ENCODE measurements at regions of chr20 and their contacts with region 1.

Region 1: DNA sequence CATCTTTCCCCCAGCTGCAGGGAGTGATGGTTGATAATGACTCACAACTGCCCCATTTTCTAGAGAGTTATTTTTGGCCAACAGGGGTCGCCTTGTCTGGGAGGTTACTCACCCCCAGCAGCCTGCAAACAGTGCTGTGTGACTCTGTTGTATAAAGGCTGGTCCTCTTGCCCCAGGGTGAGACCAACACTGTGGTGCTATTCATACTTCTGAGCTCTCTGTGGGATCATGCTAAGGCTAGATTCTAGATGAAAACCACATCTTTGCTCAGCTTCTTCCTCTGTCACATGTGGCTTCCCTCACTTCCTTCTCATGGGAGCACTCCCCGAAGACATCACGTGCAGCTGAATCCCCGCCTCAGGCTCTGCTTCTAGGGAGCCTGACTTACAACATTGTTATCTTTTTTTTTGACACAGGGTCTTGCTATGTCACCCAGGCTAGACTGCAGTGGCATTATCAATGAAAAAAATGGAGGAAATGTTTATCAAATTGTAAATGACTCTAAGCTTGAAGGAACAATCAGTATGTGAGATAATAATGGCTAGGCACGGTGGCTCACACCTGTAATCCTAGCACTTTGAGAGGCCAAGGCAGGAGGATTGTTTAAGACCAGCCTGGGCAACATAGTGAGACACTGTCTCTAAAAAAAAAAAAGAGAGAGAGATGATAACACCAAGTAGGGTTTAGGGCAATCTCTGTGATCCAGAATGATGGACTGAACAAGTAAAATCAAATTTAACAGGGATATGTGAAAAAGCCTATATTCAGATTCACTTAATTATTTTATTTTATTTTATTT is 55.7 kb upstream of the SLC23A2 start:
- DNase-seq: peak; percentile 85
- ATAC-seq: peak; percentile 98
- H3K4me3 Mint-ChIP-seq: no peak overlapping the region
- H3K27ac Mint-ChIP-seq: peak overlapping the region; percentile 83
- H3K4me1 Mint-ChIP-seq: peaks cover 22% of the 10 kb centered on the region
- H3K27me3 Mint-ChIP-seq: no peaks in the 10 kb centered on the region
- CTCF ChIP-seq: peak; percentile 71

Region 2: DNA sequence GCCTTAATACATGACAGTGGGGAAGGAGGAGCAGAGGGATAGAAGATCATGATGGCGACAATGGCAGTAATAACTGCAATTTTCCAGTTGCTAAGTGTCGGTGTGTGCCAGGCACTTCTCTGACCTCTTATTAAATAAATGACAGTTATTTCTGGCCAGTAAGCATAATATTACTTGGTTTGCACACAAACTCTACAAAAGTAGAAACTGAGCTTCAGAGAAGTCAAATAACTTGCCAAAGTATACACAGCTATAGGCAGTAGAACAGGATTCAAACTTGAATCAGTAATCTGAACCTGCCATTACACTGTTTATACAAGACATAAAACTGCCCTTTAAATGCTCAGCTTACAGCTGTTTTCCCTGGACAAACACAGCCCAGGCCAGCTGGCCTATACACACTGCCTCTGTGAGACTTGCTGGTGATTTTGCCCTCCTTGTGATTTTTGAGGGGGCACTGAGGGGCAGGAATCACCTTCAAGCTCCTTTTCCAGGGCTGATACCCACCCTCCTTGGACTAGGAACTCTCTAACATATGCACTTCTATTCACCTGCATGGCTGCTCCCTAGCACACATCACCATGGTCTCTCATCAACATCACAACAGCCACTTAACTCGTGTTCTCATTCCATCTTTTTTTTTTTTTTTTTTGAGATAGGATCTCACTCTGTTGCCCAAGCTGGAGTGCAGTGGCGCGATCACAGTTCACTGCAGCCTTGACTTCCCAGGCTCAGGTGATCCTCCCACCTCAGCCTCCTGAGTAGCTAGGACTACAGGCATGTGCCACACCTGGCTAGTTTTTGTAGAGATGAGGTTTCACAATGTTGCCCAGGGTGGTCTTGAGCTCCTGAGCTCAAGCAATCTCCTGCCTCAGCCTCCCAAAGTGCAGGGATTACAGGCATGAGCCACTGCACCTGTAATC is 119.3 kb before region 1 on chr20:
- CTCF ChIA-PET with region 1: no interaction called
- POLR2A ChIA-PET with region 1: no interaction called
- intact Hi-C with region 1: no loop called
- DNase-seq: no peak
- ATAC-seq: no peak
- H3K4me3 Mint-ChIP-seq: no peak overlapping the region
- H3K27ac Mint-ChIP-seq: no peak overlapping the region
- H3K4me1 Mint-ChIP-seq: peaks cover 11% of the 10 kb centered on the region
- H3K27me3 Mint-ChIP-seq: no peaks in the 10 kb centered on the region
- CTCF ChIP-seq: no peak

Region 3: DNA sequence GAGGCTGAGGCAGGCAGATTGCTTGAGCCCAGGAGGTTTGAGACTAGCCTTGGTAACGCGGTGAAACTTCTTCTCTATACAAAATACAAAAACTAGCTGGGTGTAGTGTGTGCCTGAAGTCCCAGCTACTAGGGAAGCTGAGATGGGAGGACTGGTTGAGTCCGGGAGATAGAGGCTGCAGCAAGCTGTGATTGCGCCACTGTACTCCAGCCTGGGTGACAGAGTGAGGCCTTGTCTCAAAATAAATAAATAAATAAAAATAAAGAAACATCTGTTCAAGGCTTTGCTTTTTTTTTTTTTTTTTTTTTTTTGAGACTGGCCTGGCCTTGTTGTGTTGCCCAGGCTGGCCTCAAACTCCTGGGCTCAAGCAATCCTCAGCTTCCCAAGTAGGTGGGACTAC is 32.0 kb before region 1 on chr20:
- CTCF ChIA-PET with region 1: no interaction called
- POLR2A ChIA-PET with region 1: no interaction called
- intact Hi-C with region 1: no loop called
- DNase-seq: no peak
- ATAC-seq: no peak
- H3K4me3 Mint-ChIP-seq: no peak overlapping the region
- H3K27ac Mint-ChIP-seq: no peak overlapping the region
- H3K4me1 Mint-ChIP-seq: peaks cover 3% of the 10 kb centered on the region
- H3K27me3 Mint-ChIP-seq: no peaks in the 10 kb centered on the region
- CTCF ChIP-seq: no peak

Region 4: GRCh38 chr20:5072756-5073659 is 16.0 kb after region 1 on chr20:
- CTCF ChIA-PET with region 1: interaction called, 20 read pairs
- POLR2A ChIA-PET with region 1: interaction called, 6 read pairs
- intact Hi-C with region 1: no loop called
- DNase-seq: no peak
- ATAC-seq: no peak
- H3K4me3 Mint-ChIP-seq: no peak overlapping the region
- H3K27ac Mint-ChIP-seq: no peak overlapping the region
- H3K4me1 Mint-ChIP-seq: peaks cover 14% of the 10 kb centered on the region
- H3K27me3 Mint-ChIP-seq: no peaks in the 10 kb centered on the region
- CTCF ChIP-seq: no peak

Region 5: DNA sequence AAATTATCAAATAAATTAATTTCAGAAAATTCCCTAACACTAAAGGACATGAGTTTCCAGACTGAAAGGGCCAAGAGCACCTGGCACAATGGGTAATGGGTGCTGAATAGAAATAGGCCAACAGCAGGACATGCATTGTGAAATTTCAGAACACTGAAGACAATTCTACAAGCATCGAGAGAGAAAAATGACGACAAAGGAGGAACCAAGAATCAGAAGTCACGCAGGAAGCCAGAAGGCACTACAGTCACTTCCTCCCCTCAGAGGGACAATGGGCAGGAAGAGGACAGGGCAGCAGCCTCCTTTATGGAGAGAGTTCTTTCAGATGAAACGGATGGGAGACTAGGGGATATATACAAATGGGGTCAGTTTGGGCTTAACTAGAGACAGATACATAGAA is 33.2 kb after region 1 on chr20:
- CTCF ChIA-PET with region 1: interaction called, 10 read pairs
- POLR2A ChIA-PET with region 1: no interaction called
- intact Hi-C with region 1: no loop called
- DNase-seq: no peak
- ATAC-seq: peak; percentile 53
- H3K4me3 Mint-ChIP-seq: no peak overlapping the region
- H3K27ac Mint-ChIP-seq: peak overlapping the region; percentile 77
- H3K4me1 Mint-ChIP-seq: peaks cover 9% of the 10 kb centered on the region
- H3K27me3 Mint-ChIP-seq: no peaks in the 10 kb centered on the region
- CTCF ChIP-seq: no peak

Measured in activated CD8-positive, alpha-beta T cell treated with anti-CD3 and anti-CD28 coated beads for 36 hours (primary cell).